ENCODE measurements at regions of chr1 and their contacts with region 1.

Region 1: DNA sequence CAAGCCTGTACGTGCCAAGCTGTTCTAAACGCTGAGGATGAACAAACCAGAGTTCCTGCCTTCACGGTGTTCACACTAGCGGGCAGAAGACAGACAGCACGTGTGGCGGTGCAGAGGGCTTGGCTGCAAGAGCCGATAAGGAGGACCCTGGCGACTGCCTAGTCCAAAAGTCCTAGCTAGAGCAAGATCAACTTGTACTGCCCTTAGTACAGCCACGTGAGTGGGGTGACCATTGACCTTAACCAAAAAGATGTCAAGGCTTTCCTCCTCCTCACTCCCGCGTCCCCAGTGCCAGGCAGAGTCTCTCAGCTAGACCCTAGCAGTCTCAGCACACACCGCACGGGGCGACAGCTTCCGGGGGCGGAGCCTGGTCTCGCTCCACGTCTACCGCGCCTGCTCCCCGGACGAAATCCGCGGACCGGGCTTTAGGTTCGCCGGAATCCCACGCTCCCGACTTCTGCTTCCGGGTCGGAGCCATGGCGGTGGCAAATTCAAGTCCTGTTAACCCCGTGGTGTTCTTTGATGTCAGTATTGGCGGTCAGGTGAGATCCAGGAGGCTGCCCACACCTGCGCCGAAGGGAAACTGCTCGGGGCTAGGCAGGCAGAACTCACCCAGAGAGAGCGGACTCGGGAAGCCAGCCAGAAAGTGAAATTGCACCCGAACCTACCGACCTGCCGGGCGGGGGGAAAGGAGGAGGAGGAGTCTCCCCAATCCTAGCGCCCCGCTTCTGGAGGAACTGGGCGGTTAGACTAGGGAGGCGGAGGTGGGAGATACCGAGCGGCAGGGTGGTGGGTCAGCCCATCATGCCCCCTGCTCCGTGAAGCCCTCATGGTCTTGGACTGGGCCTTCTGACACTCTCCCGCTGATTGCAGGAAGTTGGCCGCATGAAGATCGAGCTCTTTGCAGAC is at the start of gene PPIH:
- DNase-seq: peak; percentile 91 to 96 (median 95)
- H3K4me3 ChIP-seq: peak within 1 kb of the TSS; percentile 82 to 98 (median 85)
- H3K27ac ChIP-seq: peak within 1 kb of the TSS; percentile 37 to 83
- H3K4me1 ChIP-seq: peaks cover 13 to 25% (median 21%) of the 10 kb centered on the region in 4 experiments
- H3K27me3 ChIP-seq: no peaks in the 10 kb centered on the region

Region 2: GRCh38 chr1:42462828-42463763 is 195.1 kb before region 1 on chr1 and contains the start of gene CCDC30:
- CTCF ChIA-PET with region 1: no interaction called
- POLR2A ChIA-PET with region 1: no interaction called
- DNase-seq: peak; percentile 98 to 99 (median 99)
- H3K4me3 ChIP-seq: peak within 1 kb of the TSS; percentile 64 to 96 (median 86)
- H3K27ac ChIP-seq: peak within 1 kb of the TSS; percentile 52 to 82
- H3K4me1 ChIP-seq: peaks cover 7 to 18% (median 14%) of the 10 kb centered on the region in 4 experiments
- H3K27me3 ChIP-seq: no peaks in the 10 kb centered on the region

Region 3: GRCh38 chr1:42681741-42682483 is 23.7 kb after region 1 on chr1 and contains the start of gene YBX1:
- CTCF ChIA-PET with region 1: interaction called, 6 read pairs
- POLR2A ChIA-PET with region 1: interaction called, 18 read pairs
- DNase-seq: peak; percentile 99
- H3K4me3 ChIP-seq: peak within 1 kb of the TSS; percentile 80 to 96 (median 84)
- H3K27ac ChIP-seq: peak within 1 kb of the TSS; percentile 81 to 93
- H3K4me1 ChIP-seq: peaks cover 28 to 55% (median 40%) of the 10 kb centered on the region in 4 experiments
- H3K27me3 ChIP-seq: no peaks in the 10 kb centered on the region

Region 4: GRCh38 chr1:42816585-42817434 is 158.6 kb after region 1 on chr1 and contains the starts of genes ERMAP and SVBP:
- CTCF ChIA-PET with region 1: no interaction called
- POLR2A ChIA-PET with region 1: no interaction called
- DNase-seq: peak; percentile 82 to 91 (median 89)
- H3K4me3 ChIP-seq: peak within 1 kb of the TSS; percentile 79 to 91 (median 82)
- H3K27ac ChIP-seq: peak within 1 kb of the TSS; percentile 83 to 87
- H3K4me1 ChIP-seq: peaks cover 10 to 21% (median 16%) of the 10 kb centered on the region in 4 experiments
- H3K27me3 ChIP-seq: no peaks in the 10 kb centered on the region

Measured in common myeloid progenitor, CD34-positive (primary cell).